Transverse colon (tissue), 4 donors: ENCODE measurements at regions of chr11 and their contacts with region 1.

Region 1: GRCh38 chr11:120556797-120557196 is 45.2 kb downstream of the GRIK4 start:
- DNase-seq: no peak
- H3K4me3 ChIP-seq: no peak overlapping the region
- H3K27ac ChIP-seq: no peak overlapping the region
- H3K4me1 ChIP-seq: no peaks in the 10 kb centered on the region
- H3K27me3 ChIP-seq: peaks cover 20% of the 10 kb centered on the region
- CTCF ChIP-seq: no peak
- EP300 ChIP-seq: no peak
- POLR2A ChIP-seq: no peak

Region 2: DNA sequence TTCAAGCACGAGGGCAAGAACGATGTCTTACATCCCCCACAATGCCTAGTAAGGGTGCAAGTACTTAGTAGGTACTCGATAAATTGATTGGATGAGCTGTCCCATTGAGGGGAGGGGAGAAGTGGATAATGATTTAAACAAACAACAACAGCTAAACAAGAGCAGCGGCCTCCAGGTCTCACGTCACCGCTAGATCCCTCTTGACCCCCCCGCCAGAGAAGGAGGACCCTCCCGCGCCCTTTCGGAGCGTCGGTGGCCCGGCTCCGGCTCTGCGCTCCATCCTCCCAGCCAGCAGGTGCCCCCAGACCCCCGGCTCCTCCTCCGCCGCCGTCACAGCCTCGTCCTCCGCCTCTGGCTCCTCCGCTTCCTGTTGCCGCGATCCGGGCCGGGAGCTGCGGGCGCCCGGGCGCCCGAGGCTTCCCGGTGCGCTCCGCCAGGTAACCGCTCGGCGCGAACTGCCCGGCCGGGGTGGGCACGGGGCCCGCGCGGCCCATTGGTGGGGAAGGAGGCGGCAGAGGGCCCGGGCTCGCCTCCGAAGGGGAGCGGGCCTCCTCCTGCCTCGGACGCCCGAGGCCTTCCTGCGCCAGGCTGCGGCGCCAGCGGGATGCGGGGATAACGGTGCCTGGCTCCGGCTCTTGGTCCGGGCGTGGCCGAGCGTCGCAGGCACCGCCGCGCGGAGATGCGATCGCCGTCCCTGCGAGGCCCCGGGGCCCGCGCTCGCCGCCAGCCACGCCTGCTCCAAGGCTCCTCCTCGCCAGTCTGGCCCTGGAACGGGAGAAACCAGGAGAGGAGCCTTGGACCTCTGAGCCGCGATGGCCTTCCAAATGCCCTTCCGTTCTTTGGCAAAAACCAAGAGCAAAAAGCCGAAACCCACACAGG is 231.6 kb before region 1 on chr11 and contains the start of gene TLCD5:
- in situ Hi-C with region 1: no loop called
- intact Hi-C with region 1: no loop called
- DNase-seq: peak; percentile 36
- H3K4me3 ChIP-seq: peak within 1 kb of the TSS; percentile 48 to 82 (median 58)
- H3K27ac ChIP-seq: peak within 1 kb of the TSS; percentile 73 to 88 (median 83)
- H3K4me1 ChIP-seq: peaks cover 13 to 30% (median 19%) of the 10 kb centered on the region in 4 donors
- H3K27me3 ChIP-seq: peaks cover 24% of the 10 kb centered on the region
- CTCF ChIP-seq: no peak
- EP300 ChIP-seq: no peak
- POLR2A ChIP-seq: peak; percentile 31
- total RNA-seq, gene TLCD5: 1.3 to 9.4 (median 1.5) TPM in 3 of 4 donors, not detected in the other

Region 3: DNA sequence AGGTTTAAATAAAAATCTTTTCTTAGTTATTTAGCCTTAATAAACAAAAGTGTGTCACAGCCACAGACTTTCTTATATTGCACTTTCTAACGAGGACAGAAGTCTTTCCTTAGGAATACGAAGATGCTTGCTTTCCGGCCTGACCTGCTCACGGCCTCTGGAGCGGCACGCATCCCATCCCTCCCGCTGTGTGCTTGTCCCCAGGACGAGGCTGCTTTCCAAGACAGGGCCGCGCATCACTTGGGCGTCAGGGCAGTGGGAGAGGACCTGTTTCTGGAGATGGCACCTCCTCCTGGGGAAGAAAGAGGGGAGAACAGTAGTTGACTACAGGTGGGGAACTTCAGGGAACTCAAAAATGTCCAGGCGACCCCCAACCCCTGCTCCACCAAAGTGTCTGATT is 18.8 kb before region 1 on chr11:
- in situ Hi-C with region 1: no loop called
- intact Hi-C with region 1: loop called (anchors 1 kb)
- DNase-seq: no peak
- H3K4me3 ChIP-seq: no peak overlapping the region
- H3K27ac ChIP-seq: no peak overlapping the region
- H3K4me1 ChIP-seq: no peaks in the 10 kb centered on the region
- H3K27me3 ChIP-seq: peaks cover 56% of the 10 kb centered on the region
- CTCF ChIP-seq: no peak
- EP300 ChIP-seq: no peak
- POLR2A ChIP-seq: no peak